MCF 10A (cell line): ENCODE measurements at regions of chr3 and their contacts with region 1.

Region 1: DNA sequence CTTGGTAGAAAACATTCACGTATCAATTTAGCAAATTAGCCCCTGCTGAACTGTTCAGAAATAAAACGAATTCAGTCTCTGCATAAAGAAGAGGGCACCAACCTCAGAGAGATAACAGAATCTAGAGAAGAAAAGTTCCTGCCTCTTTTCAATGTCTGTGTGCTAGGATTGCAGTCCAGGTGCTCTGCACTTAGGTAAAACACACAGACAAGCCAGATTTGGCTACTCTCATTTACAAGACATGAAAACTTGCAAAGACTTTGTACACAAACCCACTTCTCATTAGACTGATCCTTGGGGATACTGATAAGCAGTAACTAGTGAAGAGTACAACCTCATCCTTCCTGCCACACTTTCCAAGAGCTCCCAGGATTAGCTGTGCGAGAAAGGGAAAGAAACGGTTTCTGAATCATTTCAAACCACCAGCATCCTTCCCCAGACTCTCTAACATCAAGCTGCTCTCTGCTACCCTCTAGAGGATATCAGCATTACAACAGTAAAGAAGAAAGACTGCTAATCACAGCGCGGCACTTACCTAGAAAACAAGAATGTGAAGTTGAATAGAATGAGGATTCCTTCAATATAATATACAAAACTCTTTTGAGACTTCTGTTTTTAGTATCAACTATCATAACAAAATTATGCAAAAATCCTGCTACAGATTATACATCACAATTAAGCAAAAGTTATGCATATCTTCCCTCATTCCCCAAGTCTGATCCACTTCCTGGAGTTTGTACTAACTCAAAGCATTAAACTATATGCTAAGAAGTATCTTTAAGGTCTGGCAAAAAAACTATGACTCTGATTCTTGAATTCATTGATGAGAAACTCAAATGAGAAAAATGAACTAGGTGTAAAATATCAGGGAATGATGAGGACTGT is 306.4 kb downstream of the MAGI1 start:
- DNase-seq: peak; percentile 71
- H3K4me3 Mint-ChIP-seq: no peak overlapping the region
- H3K27ac Mint-ChIP-seq: no peak overlapping the region
- H3K4me1 Mint-ChIP-seq: no peaks in the 10 kb centered on the region
- H3K27me3 Mint-ChIP-seq: no peaks in the 10 kb centered on the region
- CTCF ChIP-seq: peak; percentile 69

Region 2: DNA sequence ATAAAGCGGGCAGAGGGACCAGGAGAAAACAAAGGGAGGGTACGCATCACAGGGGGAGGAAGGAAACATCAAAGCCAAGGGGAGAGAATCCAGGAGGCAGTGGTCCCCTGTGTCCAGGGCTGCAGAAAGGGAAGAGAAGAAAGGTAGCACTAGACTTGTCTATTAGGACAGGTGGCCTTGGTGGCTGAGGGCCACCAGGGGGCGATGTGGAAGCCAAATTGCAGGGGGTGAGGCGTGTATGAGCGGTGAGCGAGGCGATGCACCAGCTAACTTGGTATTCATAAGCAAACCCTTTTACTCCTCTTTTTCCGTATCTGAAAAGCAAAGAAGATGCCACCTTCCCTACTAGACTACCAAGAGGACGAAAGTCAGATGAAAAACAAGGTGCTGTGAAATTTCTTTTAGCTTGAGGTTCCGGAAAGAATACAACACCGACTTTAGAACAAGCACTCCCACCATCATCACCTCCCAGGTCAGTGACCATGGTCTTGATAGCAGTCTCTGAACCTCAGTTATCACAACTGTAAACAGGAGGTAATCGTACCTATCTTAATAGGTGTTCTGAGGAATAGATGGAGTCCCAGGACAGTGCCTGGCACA is 390.1 kb before region 1 on chr3:
- CTCF ChIA-PET with region 1: interaction called, 3 read pairs
- POLR2A ChIA-PET with region 1: no interaction called
- intact Hi-C with region 1: loop called (anchors 2 kb)
- DNase-seq: peak; percentile 73
- H3K4me3 Mint-ChIP-seq: no peak overlapping the region
- H3K27ac Mint-ChIP-seq: no peak overlapping the region
- H3K4me1 Mint-ChIP-seq: no peaks in the 10 kb centered on the region
- H3K27me3 Mint-ChIP-seq: peaks cover 13% of the 10 kb centered on the region
- CTCF ChIP-seq: peak; percentile 68

Region 3: DNA sequence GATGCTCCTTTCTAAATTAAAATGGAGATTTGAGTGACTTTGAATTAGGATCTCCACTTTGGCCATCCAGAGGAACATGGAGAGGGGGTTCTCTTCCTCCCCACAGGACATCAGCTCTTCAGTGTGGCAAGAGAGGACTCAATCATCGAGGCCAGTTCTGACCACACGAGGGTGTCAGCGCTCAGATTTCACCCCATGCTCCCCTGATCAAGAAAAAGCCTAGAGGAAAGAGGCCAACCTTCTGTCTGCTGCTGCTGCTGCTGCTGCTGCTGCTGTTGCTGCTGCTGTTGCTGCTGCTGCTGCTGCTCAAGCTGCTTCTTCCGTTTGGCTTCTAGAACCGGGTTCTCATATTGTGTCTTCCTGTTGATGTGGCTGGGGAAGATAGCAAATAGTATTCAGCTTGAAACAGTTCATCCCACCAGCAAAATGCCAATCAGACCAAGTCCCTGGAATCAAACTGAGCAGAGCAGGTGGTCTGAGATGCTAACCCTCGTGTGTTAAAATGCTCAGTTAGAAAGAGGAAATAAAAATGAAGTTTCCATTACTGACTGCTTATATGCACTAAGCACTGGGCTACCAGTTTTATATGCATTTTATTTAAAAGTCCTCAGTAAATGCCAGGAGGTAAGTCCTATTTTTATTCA is 292.5 kb before region 1 on chr3:
- CTCF ChIA-PET with region 1: interaction called, 43 read pairs
- POLR2A ChIA-PET with region 1: no interaction called
- intact Hi-C with region 1: loop called (anchors 1 kb)
- DNase-seq: peak; percentile 66
- H3K4me3 Mint-ChIP-seq: no peak overlapping the region
- H3K27ac Mint-ChIP-seq: no peak overlapping the region
- H3K4me1 Mint-ChIP-seq: no peaks in the 10 kb centered on the region
- H3K27me3 Mint-ChIP-seq: no peaks in the 10 kb centered on the region
- CTCF ChIP-seq: peak; percentile 45

Region 4: DNA sequence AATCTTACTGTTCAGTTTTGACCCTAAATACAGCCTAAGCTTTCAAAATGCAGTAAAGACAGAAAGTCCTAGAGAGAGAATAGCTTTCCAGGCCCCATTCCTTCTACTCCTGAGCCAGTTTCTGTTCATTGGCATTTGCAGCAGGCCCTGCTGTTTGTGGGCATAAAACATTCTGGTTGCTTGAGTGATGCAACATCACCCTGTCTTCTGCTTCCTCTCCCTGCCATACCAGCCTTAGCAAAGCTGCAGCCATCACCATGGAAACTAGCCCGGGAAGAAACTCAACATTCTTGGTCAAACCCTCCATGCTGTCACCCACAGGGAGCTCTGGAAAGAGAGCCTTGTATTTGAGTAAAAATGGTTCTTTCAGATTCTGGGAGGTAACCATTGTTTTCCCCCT is 19.3 kb before region 1 on chr3:
- CTCF ChIA-PET with region 1: interaction called, 11 read pairs
- POLR2A ChIA-PET with region 1: no interaction called
- intact Hi-C with region 1: no loop called
- DNase-seq: no peak
- H3K4me3 Mint-ChIP-seq: no peak overlapping the region
- H3K27ac Mint-ChIP-seq: no peak overlapping the region
- H3K4me1 Mint-ChIP-seq: no peaks in the 10 kb centered on the region
- H3K27me3 Mint-ChIP-seq: no peaks in the 10 kb centered on the region
- CTCF ChIP-seq: no peak

Region 5: DNA sequence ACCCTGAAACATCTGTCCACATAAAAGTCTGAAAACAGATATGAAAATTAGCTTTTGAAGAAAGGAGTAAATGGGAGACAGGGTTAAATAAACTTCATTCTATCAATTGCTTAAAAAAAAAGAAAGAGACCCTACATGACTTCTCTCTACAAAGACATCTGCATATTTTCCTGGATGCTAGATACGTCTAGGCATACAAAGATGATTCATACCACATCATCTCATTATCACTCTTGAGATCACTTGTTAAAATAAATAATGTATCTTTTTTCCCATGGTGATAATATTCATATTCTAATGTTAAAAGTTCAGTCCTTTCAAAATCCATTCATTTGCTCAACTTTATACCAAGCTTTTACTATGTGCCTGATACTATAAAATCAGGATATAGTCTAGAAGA is 10.6 kb after region 1 on chr3:
- CTCF ChIA-PET with region 1: interaction called, 17 read pairs
- POLR2A ChIA-PET with region 1: no interaction called
- intact Hi-C with region 1: no loop called
- DNase-seq: no peak
- H3K4me3 Mint-ChIP-seq: no peak overlapping the region
- H3K27ac Mint-ChIP-seq: no peak overlapping the region
- H3K4me1 Mint-ChIP-seq: no peaks in the 10 kb centered on the region
- H3K27me3 Mint-ChIP-seq: no peaks in the 10 kb centered on the region
- CTCF ChIP-seq: no peak

Region 6: DNA sequence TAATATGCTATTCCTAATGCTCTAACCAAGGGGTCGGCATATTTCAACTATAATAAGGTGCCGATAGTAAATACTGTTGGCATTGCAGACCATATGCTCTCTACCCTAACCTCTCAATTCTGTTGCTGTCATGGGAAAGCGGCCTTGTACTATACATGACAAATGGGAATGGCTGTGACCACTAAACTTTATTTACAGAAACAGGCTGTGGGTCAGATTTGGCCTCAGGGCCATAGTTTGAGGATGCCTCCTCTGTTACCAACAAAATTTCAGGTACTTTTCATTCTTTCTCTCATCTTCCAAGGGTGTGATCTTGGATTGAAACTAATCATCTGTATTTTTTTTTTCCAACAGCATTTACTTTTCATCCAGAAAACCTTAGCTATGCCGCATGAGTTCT is 64.4 kb after region 1 on chr3:
- CTCF ChIA-PET with region 1: no interaction called
- POLR2A ChIA-PET with region 1: no interaction called
- intact Hi-C with region 1: no loop called
- DNase-seq: no peak
- H3K4me3 Mint-ChIP-seq: no peak overlapping the region
- H3K27ac Mint-ChIP-seq: no peak overlapping the region
- H3K4me1 Mint-ChIP-seq: peaks cover 9% of the 10 kb centered on the region
- H3K27me3 Mint-ChIP-seq: no peaks in the 10 kb centered on the region
- CTCF ChIP-seq: no peak